A549 (cell line): ENCODE measurements at regions of chr19 and their contacts with region 1.

Region 1: GRCh38 chr19:41226053-41226873 is 7.2 kb downstream of the AXL start:
- DNase-seq: peak; percentile 95 to 97
- ATAC-seq: peak; percentile 73 to 77
- H3K4me3 ChIP-seq: peak overlapping the region; percentile 41
- H3K27ac ChIP-seq: peak overlapping the region; percentile 91 to 95
- H3K4me1 ChIP-seq: peaks cover 64% of the 10 kb centered on the region
- CTCF ChIP-seq: no peak
- EP300 ChIP-seq: peak; percentile 72 to 93; a peak in 3 of 5 replicates
- POLR2A ChIP-seq: no peak; the same call in 1 of the 2 replicates
- RAD21 ChIP-seq: peak in 1 of 2 experiments; percentile 36; a peak in 3 of 5 replicates

Region 2: DNA sequence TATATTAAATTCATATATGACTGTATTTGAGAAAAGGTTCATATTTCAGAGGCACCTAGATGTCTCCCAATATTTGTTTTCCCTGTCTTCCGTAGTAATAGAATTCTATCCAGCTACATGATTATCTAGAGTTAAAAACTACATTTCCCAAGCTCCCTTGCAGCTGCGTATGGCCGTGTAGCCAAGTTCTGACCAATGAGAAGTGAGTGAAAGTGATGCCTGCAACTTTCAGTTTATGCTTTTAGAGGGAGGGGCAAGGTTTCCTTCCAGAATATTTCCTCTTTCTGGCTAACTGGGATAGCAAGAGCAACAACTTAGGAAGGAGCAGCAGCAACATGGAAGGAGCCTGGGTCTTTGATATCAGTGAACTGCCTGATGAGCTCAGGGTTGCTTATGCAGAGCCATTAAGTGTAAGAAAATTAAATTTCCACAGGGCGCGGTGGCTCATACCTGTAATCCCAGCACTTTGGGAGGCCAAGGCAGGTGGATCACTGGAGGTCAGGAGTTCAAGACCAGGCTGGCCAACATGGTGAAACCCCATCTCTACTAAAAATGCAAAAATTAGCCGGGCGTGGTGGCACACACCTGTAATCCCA is 161.2 kb before region 1 on chr19:
- CTCF ChIA-PET with region 1: no interaction called
- POLR2A ChIA-PET with region 1: no interaction called
- DNase-seq: peak; percentile 69
- ATAC-seq: peak; percentile 65 to 94; a peak in 5 of 6 replicates
- H3K4me3 ChIP-seq: no peak overlapping the region
- H3K27ac ChIP-seq: no peak overlapping the region
- H3K4me1 ChIP-seq: no peaks in the 10 kb centered on the region
- CTCF ChIP-seq: no peak
- EP300 ChIP-seq: no peak
- POLR2A ChIP-seq: no peak
- RAD21 ChIP-seq: no peak

Region 3: DNA sequence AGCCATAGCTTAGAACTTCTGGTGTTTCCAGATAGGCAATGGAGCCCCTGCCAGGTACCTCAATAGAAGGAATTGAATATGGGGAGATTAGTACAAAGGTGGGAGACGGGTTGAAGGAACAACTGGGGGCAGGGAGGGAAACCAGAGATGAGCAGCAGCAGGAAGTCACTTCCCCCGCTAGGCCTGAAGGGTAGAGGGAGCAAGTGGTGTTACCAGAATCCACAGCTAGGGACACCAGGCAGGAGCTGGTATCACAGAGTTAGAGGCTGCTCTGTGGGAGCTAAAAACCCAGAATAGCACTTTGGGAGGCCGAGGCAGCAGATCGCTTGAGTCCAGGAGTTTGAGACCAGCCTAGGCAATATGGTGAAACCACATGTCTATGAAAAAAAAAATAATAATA is 22.6 kb after region 1 on chr19:
- CTCF ChIA-PET with region 1: interaction called, 31 read pairs
- POLR2A ChIA-PET with region 1: interaction called, 13 read pairs
- DNase-seq: no peak
- ATAC-seq: peak; percentile 67 to 68; a peak in 5 of 6 replicates
- H3K4me3 ChIP-seq: no peak overlapping the region
- H3K27ac ChIP-seq: no peak overlapping the region
- H3K4me1 ChIP-seq: no peaks in the 10 kb centered on the region
- CTCF ChIP-seq: no peak
- EP300 ChIP-seq: no peak
- POLR2A ChIP-seq: no peak
- RAD21 ChIP-seq: no peak